ENCODE measurements at regions of chr16 and their contacts with region 1.

Region 1: DNA sequence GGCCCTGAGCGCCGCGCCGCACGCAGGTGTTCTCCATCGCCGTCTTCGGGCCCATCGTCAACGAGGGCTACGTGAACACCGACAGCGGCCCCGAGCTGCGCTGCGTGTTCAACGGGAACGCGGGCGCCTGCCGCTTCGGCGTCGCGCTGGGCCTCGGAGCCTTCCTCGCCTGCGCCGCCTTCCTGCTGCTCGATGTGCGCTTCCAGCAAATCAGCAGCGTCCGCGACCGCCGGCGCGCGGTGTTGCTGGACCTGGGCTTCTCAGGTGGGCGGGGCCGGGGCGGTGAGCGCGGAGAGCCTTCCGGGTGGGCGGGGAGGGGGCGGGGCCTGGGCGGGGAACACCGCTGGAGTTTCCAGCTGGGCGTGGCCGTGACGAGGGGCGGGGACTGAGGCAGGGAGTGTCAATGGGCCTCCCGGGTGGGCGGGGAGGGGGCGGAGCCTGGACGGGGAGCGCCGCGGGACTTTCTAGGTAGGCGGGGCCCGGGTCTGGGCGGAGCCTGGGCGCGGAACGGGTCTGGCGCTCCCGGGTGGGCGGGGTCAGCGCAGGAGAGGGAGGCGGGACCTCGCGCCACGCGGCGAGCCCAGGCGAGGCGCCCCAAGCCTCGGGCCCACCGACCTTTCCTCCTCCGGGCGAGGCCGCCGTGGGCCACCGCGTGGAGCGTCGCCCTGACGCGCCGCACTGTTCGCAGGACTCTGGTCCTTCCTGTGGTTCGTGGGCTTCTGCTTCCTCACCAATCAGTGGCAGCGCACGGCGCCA is 2.4 kb downstream of the SYNGR3 start:
- DNase-seq: peak; percentile 95
- ATAC-seq: peak; percentile 79
- H3K4me3 Mint-ChIP-seq: peak overlapping the region; percentile 82
- H3K27ac Mint-ChIP-seq: peak overlapping the region; percentile 88
- H3K4me1 Mint-ChIP-seq: peaks cover 29% of the 10 kb centered on the region
- H3K27me3 Mint-ChIP-seq: no peaks in the 10 kb centered on the region
- CTCF ChIP-seq: no peak

Region 2: GRCh38 chr16:1826691-1827575 is 165.2 kb before region 1 on chr16 and contains the starts of genes FAHD1 and HAGH:
- CTCF ChIA-PET with region 1: no interaction called
- POLR2A ChIA-PET with region 1: interaction called, 11 read pairs
- intact Hi-C with region 1: no loop called
- DNase-seq: peak; percentile 95
- ATAC-seq: peak; percentile 88
- H3K4me3 Mint-ChIP-seq: peak within 1 kb of the TSS; percentile 94
- H3K27ac Mint-ChIP-seq: peak within 1 kb of the TSS; percentile 91
- H3K4me1 Mint-ChIP-seq: peaks cover 39% of the 10 kb centered on the region
- H3K27me3 Mint-ChIP-seq: no peaks in the 10 kb centered on the region
- CTCF ChIP-seq: no peak
- total RNA-seq, gene FAHD1: 10.2 and 10.4 TPM in 2 replicates
- total RNA-seq, gene HAGH: 19.0 and 19.5 TPM in 2 replicates

Region 3: DNA sequence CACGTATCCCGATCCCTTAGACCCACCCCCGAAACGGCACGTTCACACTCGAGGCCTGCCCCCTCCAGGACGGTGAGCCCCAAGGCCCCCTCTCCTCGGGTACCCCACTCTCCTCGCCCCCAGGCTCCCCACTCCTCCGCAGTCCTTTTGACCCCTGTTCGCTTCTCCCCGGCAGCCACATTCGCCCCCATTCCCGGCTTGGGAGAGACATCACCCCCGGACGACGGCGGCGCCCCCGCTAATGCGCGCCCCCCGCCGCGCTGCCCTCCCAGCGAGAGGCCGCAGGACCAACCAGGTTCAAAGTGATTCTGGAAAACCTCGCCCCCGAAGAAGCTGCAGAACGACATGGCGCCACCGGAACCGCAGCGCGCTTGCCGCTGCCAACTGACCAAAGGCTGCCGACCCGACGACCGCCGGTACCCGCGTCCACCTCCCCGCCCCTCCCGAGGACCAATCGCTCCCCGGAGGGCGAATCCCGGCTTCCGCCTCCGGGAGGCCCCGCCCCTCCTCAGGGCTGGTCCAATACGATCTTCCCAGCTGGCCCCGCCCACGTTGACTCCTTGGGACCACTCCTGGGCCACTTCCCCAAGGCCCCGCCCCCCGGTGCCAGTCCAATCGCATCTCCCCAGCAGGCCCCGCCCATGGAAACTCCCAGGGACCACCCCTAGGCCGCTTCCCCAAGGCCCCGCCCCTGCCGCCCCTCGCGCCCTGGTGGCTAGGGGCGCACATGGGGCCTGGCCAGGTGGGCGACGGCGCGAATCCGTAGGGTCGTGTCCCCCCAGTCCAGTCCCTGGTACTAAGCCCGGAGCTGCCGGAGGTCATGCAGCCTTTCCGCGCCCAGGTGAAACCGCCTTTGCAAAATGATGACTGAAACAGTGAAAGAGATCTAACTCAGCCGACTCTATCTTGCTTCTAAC is 49.1 kb before region 1 on chr16 and contains the start of gene MSRB1:
- CTCF ChIA-PET with region 1: no interaction called
- POLR2A ChIA-PET with region 1: interaction called, 13 read pairs
- intact Hi-C with region 1: loop called (anchors 1 kb)
- DNase-seq: peak; percentile 99
- ATAC-seq: peak; percentile 98
- H3K4me3 Mint-ChIP-seq: peak within 1 kb of the TSS; percentile 87
- H3K27ac Mint-ChIP-seq: peak within 1 kb of the TSS; percentile 74
- H3K4me1 Mint-ChIP-seq: peaks cover 30% of the 10 kb centered on the region
- H3K27me3 Mint-ChIP-seq: no peaks in the 10 kb centered on the region
- CTCF ChIP-seq: no peak
- total RNA-seq, gene MSRB1: 14.7 and 16.6 TPM in 2 replicates

Region 4: DNA sequence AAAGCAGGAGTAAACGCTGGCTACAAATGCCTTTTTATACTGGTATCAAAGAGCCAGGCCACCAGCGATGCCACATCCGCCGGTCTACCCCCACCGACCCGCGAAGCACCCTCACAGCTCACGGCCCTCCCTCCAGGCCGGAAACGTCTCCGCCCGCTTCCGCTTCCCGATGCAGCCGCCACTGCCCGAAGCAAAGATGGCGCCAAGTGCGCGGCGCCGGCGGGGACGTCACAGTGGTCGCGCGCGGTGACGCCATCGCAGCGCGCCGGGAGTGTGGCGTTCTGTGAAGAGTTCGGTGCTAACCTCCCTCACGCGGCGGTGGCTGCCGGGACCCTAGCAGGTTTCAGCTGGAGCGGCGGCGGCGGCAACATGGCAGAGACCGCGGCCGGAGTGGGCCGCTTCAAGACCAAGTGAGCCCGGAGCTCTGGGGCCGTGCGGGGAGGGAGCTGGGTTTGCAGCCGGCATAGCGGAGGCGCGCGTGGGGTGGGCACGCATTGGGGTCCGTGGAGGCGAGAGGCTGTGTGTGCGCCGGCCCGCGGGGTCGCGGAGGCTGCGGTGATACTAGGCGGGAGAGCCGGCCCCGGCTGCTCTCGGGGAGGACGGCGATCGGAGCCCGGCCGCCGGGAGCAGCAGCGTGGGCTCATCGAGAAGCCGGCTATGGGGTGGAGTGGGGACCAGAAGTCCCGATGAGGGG is 20.2 kb before region 1 on chr16 and contains the start of gene TBL3:
- CTCF ChIA-PET with region 1: no interaction called
- POLR2A ChIA-PET with region 1: interaction called, 351 read pairs
- intact Hi-C with region 1: loop called (anchors 1 kb)
- DNase-seq: peak; percentile 99
- ATAC-seq: peak; percentile 97
- H3K4me3 Mint-ChIP-seq: peak within 1 kb of the TSS; percentile 93
- H3K27ac Mint-ChIP-seq: peak within 1 kb of the TSS; percentile 97
- H3K4me1 Mint-ChIP-seq: peaks cover 23% of the 10 kb centered on the region
- H3K27me3 Mint-ChIP-seq: no peaks in the 10 kb centered on the region
- CTCF ChIP-seq: no peak
- total RNA-seq, gene TBL3: 41.8 and 44.2 TPM in 2 replicates

Region 5: GRCh38 chr16:2003827-2004641 is 11.9 kb after region 1 on chr16:
- CTCF ChIA-PET with region 1: interaction called, 7 read pairs
- POLR2A ChIA-PET with region 1: interaction called, 20 read pairs
- intact Hi-C with region 1: loop called (anchors 1 kb)
- DNase-seq: peak; percentile 80
- ATAC-seq: peak; percentile 99
- H3K4me3 Mint-ChIP-seq: no peak overlapping the region
- H3K27ac Mint-ChIP-seq: no peak overlapping the region
- H3K4me1 Mint-ChIP-seq: peaks cover 38% of the 10 kb centered on the region
- H3K27me3 Mint-ChIP-seq: no peaks in the 10 kb centered on the region
- CTCF ChIP-seq: peak; percentile 47

Region 6: DNA sequence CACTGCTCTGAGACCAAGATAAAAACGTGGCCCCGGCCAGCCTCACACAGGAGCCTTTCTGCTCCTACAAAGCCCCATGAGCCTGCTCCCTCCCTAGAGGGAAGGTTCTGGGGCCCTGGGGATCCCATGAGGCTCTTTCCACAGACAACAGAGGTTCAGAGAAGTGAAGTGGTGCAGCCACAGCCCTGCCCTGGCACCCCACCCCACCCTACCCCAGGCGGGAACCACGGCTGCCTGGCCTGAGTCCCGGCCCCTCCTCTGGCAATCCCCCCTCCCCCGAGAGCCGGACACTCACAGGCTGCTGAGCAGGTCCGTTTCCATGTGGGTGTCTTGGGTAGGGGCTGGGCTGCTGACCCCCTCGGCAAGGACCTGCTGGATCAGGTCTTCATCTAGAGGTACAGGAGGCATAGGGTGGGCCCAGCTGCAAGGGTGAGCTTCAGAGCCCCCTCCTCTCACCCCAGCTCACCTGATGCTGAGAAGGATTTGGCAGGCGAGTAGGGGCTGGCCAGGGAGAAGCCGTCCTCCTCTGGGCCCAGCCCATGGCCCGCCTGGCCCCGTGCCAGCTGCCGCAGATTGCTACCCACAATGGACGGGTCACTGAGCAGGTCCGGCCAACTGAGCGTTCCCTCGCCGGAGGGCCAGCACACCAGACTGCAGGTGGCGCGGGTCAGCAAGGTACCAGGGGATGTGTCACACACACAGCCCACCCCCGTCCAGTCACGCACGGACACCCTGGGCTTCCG is 104.9 kb after region 1 on chr16:
- CTCF ChIA-PET with region 1: no interaction called
- POLR2A ChIA-PET with region 1: no interaction called
- intact Hi-C with region 1: no loop called
- DNase-seq: no peak
- ATAC-seq: no peak
- H3K4me3 Mint-ChIP-seq: no peak overlapping the region
- H3K27ac Mint-ChIP-seq: no peak overlapping the region
- H3K4me1 Mint-ChIP-seq: no peaks in the 10 kb centered on the region
- H3K27me3 Mint-ChIP-seq: no peaks in the 10 kb centered on the region
- CTCF ChIP-seq: no peak

Region 7: DNA sequence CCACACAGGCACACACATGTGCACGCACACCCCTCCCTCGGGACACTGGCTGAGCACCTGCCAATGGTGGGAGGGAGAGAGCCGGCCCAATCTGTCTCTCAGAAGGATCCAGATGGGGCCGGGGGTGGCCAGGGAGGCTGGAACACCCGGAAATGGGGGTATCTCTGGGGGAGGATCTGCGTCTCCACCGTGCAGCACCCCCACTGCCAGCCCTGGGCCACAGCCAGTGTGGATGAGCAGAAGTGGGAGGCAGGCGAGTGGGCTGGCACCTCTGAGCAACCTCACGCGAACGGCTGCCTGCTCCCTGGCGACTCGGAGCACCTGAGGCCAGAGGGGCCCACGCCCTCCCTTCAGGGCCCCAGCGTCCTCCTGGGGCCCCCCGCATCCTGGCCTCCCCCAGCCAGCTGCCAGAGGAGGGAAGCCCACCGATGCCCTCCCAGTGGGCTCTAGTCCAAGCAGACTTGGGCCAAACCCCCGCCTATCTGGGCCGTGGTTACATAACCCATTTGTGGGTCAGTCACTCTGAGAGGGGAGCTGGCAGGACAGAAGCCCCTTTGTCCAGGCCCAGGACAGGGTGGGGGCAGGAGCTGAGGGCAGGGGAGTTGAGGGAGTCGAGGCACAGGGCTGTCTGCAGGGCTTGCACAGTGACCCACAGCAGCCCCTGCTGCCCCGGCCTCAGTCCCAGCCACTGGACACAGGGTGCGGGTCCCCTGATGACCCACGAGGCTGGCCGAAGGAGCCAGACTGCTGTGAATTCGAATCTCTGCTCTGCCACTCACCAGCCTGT is 198.7 kb after region 1 on chr16:
- CTCF ChIA-PET with region 1: no interaction called
- POLR2A ChIA-PET with region 1: no interaction called
- intact Hi-C with region 1: no loop called
- DNase-seq: no peak
- ATAC-seq: no peak
- H3K4me3 Mint-ChIP-seq: no peak overlapping the region
- H3K27ac Mint-ChIP-seq: no peak overlapping the region
- H3K4me1 Mint-ChIP-seq: peaks cover 8% of the 10 kb centered on the region
- H3K27me3 Mint-ChIP-seq: peaks cover 9% of the 10 kb centered on the region
- CTCF ChIP-seq: no peak